Activated CD4-positive, alpha-beta T cell treated with anti-CD3 and anti-CD28 coated beads, Interleukin-2, amount 10 ng/mL, durations not matched to agents 24 days and 14 days (primary cell): ENCODE measurements at regions of chr3 and their contacts with region 1.

Region 1: GRCh38 chr3:120506828-120507774 is 56.3 kb upstream of the FSTL1 start:
- DNase-seq: no peak
- H3K4me3 Mint-ChIP-seq: no peak overlapping the region
- H3K27ac Mint-ChIP-seq: no peak overlapping the region
- H3K4me1 Mint-ChIP-seq: no peaks in the 10 kb centered on the region
- H3K27me3 Mint-ChIP-seq: peaks cover 5% of the 10 kb centered on the region

Region 2: DNA sequence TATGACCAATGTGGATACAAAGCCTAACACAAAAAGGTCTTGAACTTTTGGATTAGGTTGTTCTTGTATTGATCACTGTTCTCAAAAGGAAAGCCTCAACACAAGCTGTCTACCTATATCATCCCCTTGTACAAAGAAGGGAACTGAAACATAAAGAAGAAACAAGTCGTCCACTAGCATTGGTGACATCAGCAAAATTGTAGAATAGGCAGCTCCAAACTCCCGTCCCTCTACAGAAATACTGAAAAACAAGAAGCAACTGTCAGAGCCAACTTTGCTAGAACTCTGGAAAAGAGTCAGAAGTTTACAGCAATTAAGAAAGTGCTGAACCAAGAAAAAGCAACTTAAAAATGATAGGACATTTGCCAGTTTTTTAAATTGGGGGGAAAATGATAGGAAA is 732.7 kb before region 1 on chr3:
- intact Hi-C with region 1: no loop called
- DNase-seq: no peak
- H3K4me3 Mint-ChIP-seq: no peak overlapping the region
- H3K27ac Mint-ChIP-seq: no peak overlapping the region
- H3K4me1 Mint-ChIP-seq: no peaks in the 10 kb centered on the region
- H3K27me3 Mint-ChIP-seq: peaks cover 21% of the 10 kb centered on the region

Region 3: DNA sequence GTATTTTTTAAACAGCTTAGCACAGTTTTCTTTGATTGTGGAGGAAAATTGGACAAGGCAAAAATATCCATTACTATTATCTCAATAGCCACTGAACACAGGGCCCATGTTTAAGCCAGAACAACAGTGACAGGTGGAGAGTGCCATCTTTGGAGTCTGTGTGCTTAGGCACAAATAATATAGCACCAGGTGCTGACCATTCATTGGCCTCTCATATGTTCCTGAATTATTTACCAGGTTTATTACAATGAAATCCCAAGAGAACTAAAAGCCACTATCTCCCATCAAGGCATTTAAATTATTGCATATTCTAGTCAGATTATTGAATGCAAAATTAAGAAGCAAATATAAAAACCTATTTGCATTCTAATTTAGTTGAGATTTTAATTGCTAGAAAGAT is 261.7 kb before region 1 on chr3:
- intact Hi-C with region 1: loop called (anchors 1 kb)
- DNase-seq: no peak
- H3K4me3 Mint-ChIP-seq: no peak overlapping the region
- H3K27ac Mint-ChIP-seq: no peak overlapping the region
- H3K4me1 Mint-ChIP-seq: no peaks in the 10 kb centered on the region
- H3K27me3 Mint-ChIP-seq: peaks cover 26% of the 10 kb centered on the region